Pancreas (tissue), 10 donors: ENCODE measurements at regions of chr18 and their contacts with region 1.

Region 1: DNA sequence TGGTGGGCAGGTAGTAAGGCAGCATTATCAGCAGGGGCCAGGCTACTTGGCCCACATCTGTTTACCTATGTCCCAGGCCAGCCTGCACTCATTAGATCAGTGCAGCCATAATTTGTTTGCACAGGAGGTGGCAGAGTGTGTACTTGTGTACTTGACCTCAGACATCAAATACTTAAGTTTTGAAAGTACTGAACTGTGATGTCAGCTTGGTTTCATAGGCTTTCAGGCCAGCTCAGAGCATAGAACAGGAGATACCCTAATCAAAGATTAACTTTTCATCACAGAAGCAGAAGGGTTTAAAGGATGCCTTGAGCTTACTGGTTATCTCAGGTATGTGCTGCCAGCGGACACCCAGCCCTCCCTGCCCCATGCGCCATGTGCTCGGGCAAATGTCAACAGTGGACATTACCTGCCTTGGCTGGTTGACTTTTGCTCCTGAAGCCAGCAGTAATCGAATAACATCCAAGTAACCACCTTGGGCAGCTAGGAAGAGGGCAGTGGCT is 33.2 kb downstream of the ANKRD29 start:
- DNase-seq: no peak
- ATAC-seq: peak; percentile 46 to 80 (median 74)
- H3K4me3 ChIP-seq: no peak overlapping the region
- H3K27ac ChIP-seq: no peak overlapping the region
- H3K4me1 ChIP-seq: peaks cover 0 to 8% (median 0%) of the 10 kb centered on the region in 3 donors
- H3K27me3 ChIP-seq: no peaks in the 10 kb centered on the region
- CTCF ChIP-seq: no peak

Region 2: GRCh38 chr18:23675236-23675635 is 45.7 kb after region 1 on chr18:
- intact Hi-C with region 1: loop called in 1 of 3 experiments (anchors 5 kb)
- DNase-seq: no peak
- ATAC-seq: no peak
- H3K4me3 ChIP-seq: no peak overlapping the region
- H3K27ac ChIP-seq: no peak overlapping the region
- H3K4me1 ChIP-seq: no peaks in the 10 kb centered on the region
- H3K27me3 ChIP-seq: no peaks in the 10 kb centered on the region
- CTCF ChIP-seq: no peak

Region 3: GRCh38 chr18:23689616-23690504 is 60.4 kb after region 1 on chr18:
- intact Hi-C with region 1: loop called in 1 of 3 experiments (anchors 10 kb)
- DNase-seq: peak in 5 of 6 donors; percentile 9 to 83 (median 53)
- ATAC-seq: peak; percentile 48 to 59 (median 53)
- H3K4me3 ChIP-seq: peak overlapping the region; percentile 38 to 75 (median 55)
- H3K27ac ChIP-seq: no peak overlapping the region
- H3K4me1 ChIP-seq: peaks cover 0 to 12% (median 5%) of the 10 kb centered on the region in 3 donors
- H3K27me3 ChIP-seq: no peaks in the 10 kb centered on the region
- CTCF ChIP-seq: no peak

Region 4: DNA sequence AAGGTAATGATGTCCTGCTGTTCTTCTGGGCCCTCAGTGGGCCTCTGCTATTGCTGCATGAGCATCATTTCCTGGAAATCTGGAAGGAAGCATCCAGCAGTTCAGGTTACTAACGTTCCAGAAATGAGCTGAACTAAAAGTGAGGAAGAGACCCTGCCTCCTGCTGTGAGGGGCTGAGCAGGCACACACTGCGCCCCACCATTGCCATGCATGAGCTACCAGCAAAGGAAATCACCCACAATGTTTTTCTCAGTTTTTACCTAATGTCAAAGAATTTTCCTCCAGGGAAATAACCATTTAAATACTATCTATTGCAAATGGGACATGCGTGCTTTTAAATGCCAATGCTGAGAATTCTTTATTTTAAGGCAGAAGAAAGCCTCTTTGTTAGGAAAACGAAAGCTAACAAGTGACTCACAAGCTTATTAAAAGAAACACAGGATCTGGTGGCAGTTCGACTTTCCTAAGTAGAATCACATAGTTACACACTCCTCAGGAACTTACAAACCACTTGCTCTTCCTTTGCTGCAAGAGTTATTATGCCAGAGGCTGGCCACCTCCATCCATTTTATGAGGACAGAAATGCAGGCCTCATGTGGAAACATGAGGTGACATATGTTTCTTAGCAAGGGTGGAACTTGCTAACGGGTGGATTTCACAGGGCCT is 232.4 kb after region 1 on chr18:
- intact Hi-C with region 1: no loop called
- DNase-seq: no peak
- ATAC-seq: peak in 3 of 4 donors; percentile 33 to 65 (median 38)
- H3K4me3 ChIP-seq: no peak overlapping the region
- H3K27ac ChIP-seq: peak overlapping the region in 3 of 4 donors; percentile 17 to 66 (median 56)
- H3K4me1 ChIP-seq: no peaks in the 10 kb centered on the region
- H3K27me3 ChIP-seq: no peaks in the 10 kb centered on the region
- CTCF ChIP-seq: no peak

Region 5: DNA sequence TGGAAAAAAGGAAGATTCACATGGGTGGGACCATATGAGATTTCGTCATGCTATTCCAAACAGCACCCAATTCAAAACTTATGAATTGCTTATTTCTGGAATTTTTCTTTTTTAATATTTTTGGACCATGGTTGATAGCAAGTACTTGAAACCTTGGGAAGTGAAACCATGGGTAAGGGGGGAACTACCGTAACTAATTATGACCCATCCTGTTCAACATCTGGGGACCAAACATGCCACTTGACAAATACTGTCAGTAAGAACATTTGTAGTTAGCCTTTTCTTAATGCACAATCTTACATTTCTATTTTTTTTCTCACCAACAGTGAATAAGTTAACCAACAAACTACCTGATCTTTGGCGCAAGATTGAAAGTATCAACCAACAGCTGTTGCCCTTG is 279.3 kb after region 1 on chr18:
- intact Hi-C with region 1: no loop called
- DNase-seq: no peak
- ATAC-seq: no peak
- H3K4me3 ChIP-seq: no peak overlapping the region
- H3K27ac ChIP-seq: no peak overlapping the region
- H3K4me1 ChIP-seq: no peaks in the 10 kb centered on the region
- H3K27me3 ChIP-seq: no peaks in the 10 kb centered on the region
- CTCF ChIP-seq: no peak